ENCODE measurements at regions of chr12 and their contacts with region 1.

Region 1: DNA sequence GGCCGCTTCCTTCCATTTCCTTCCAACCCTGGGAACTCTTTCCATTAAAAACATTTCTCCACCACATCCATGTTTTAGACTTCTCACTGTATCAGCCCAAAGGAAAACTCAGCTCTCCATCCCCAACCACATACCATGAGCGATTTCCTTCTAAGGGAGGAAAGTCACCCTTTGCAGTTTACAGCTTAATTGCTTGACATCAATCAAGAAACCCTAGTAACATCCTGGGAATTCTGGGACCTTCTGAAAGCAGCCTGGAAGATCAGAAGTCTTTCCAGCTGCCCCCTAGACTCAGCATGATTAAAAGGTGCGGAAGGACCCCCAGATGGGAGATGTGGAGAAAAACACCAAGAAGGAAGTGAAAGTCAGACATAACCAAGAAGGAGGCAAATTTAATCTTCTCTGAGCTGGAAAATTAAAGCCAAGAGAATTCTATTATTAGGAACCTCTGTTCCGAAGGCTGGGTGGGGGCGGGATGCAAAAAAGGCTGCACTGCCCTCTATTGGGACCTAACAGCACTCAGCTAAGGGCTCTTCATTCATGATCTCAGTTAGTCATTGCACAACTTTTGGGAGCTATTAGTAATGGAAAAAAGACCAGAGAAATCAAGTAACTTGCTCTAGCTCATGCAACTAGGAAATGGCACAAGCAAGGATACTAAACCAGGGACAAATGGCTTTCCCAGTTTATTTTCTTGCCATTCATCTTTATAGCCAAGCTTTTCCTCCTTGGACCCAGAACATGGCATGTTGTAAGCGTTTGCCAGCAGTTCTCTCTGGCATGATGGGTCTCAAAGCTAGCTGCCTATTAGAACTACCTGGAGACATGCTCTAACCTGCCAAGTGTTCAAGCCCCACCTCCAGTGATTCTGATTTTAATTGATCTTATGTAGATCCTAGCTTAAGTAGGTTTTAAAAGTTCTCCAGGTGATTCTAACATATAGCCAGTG is 73.1 kb upstream of the PLXNC1 start:
- DNase-seq: no peak
- H3K4me3 ChIP-seq: no peak overlapping the region
- H3K27ac ChIP-seq: no peak overlapping the region
- H3K4me1 ChIP-seq: peaks cover 0 to 3% (median 0%) of the 10 kb centered on the region in 4 experiments; a peak in 1 of 7 replicates
- H3K27me3 ChIP-seq: no peaks in the 10 kb centered on the region
- CTCF ChIP-seq: peak; percentile 51 to 72 (median 64)
- EP300 ChIP-seq: no peak
- POLR2A ChIP-seq: no peak
- RAD21 ChIP-seq: peak; percentile 82 to 83

Region 2: GRCh38 chr12:93751864-93752610 is 323.2 kb before region 1 on chr12:
- CTCF ChIA-PET with region 1: interaction called, 10 read pairs
- POLR2A ChIA-PET with region 1: no interaction called
- DNase-seq: no peak
- H3K4me3 ChIP-seq: no peak overlapping the region
- H3K27ac ChIP-seq: no peak overlapping the region
- H3K4me1 ChIP-seq: no peaks in the 10 kb centered on the region
- H3K27me3 ChIP-seq: no peaks in the 10 kb centered on the region
- CTCF ChIP-seq: no peak
- EP300 ChIP-seq: no peak
- POLR2A ChIP-seq: no peak
- RAD21 ChIP-seq: no peak

Region 3: GRCh38 chr12:93894391-93895088 is 180.7 kb before region 1 on chr12:
- CTCF ChIA-PET with region 1: interaction called, 13 read pairs
- POLR2A ChIA-PET with region 1: no interaction called
- DNase-seq: peak in 1 of 2 experiments; percentile 37
- H3K4me3 ChIP-seq: no peak overlapping the region
- H3K27ac ChIP-seq: no peak overlapping the region
- H3K4me1 ChIP-seq: peaks cover 0 to 3% (median 1%) of the 10 kb centered on the region in 4 experiments; a peak in 2 of 7 replicates
- H3K27me3 ChIP-seq: no peaks in the 10 kb centered on the region
- CTCF ChIP-seq: no peak
- EP300 ChIP-seq: no peak
- POLR2A ChIP-seq: no peak
- RAD21 ChIP-seq: no peak

Region 4: DNA sequence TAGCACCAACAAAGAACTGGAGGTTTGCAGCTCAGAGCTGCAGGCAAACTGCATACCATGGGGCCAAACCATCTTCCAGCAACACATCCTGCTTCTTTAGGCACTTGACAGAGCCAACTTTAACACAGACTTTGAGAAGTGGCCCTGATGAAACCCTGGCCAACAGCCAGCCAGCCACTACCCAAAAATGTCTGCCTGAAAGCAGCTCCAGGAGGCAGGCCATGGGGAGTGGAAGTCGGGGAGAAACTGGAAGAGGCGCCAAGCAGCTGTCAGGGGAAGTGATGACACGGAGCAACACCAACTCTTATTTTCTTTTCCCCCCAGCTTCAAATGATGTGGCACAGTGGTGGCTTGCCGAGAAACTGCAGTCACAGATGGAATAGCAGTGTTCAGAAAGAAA is 37.8 kb before region 1 on chr12:
- CTCF ChIA-PET with region 1: interaction called, 10 read pairs
- POLR2A ChIA-PET with region 1: no interaction called
- DNase-seq: no peak
- H3K4me3 ChIP-seq: no peak overlapping the region
- H3K27ac ChIP-seq: no peak overlapping the region
- H3K4me1 ChIP-seq: peaks cover 0 to 2% (median 0%) of the 10 kb centered on the region in 4 experiments; a peak in 2 of 7 replicates
- H3K27me3 ChIP-seq: no peaks in the 10 kb centered on the region
- CTCF ChIP-seq: no peak
- EP300 ChIP-seq: no peak
- POLR2A ChIP-seq: no peak
- RAD21 ChIP-seq: no peak

Region 5: DNA sequence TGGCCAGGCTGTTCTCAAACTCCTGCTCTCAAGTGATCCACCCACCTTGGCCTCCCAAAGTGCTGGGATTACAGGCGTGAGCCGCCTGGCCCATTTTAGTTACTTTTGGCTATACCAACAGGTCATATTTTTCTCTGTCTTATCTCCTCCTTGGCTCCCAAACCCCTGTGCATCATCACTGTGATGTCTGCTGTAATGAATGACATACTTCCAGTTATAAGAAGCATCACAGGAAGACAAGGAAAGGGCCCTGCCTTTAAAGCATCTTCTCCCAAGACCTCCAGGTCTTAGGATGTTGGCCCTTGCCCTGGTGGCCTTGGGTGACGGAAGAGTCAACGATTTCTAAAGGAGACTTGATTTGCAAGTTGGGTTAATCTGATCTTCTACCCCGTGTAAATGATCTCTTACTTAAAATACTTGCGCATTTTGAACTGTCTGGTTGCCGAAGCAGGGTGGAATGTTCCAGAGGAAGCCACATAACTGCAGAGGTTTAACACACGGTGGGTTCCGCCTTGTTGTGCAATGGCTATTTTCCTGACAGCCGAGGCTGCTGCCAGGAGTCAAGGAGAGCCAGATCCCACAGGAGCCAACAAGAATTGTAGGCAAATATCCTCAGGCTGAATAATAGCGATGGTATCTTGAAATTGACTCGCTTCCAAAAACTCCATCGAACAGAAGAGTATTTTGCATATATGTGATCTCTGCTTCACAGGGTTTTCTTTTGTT is 17.4 kb after region 1 on chr12:
- CTCF ChIA-PET with region 1: interaction called, 152 read pairs
- POLR2A ChIA-PET with region 1: interaction called, 3 read pairs
- DNase-seq: no peak
- H3K4me3 ChIP-seq: no peak overlapping the region
- H3K27ac ChIP-seq: no peak overlapping the region
- H3K4me1 ChIP-seq: no peaks in the 10 kb centered on the region
- H3K27me3 ChIP-seq: no peaks in the 10 kb centered on the region
- CTCF ChIP-seq: no peak
- EP300 ChIP-seq: no peak
- POLR2A ChIP-seq: no peak
- RAD21 ChIP-seq: no peak